ENCODE measurements at regions of chr10 and their contacts with region 1.

Region 1: GRCh38 chr10:75099952-75100763 is 11.3 kb upstream of the SAMD8 start:
- DNase-seq: peak; percentile 78 to 85
- H3K4me3 ChIP-seq: no peak overlapping the region
- H3K27ac ChIP-seq: peak overlapping the region; percentile 66 to 87
- H3K4me1 ChIP-seq: peaks cover 0 to 8% of the 10 kb centered on the region in 2 donors
- H3K27me3 ChIP-seq: no peaks in the 10 kb centered on the region
- CTCF ChIP-seq: peak; percentile 98 to 99 (median 99)
- POLR2A ChIP-seq: peak in 1 of 2 donors; percentile 31

Region 2: GRCh38 chr10:74262856-74263255 is 837.3 kb before region 1 on chr10:
- intact Hi-C with region 1: loop called (anchors 5 kb)
- DNase-seq: no peak
- H3K4me3 ChIP-seq: no peak overlapping the region
- H3K27ac ChIP-seq: no peak overlapping the region
- H3K4me1 ChIP-seq: no peaks in the 10 kb centered on the region
- H3K27me3 ChIP-seq: no peaks in the 10 kb centered on the region
- CTCF ChIP-seq: no peak
- POLR2A ChIP-seq: no peak

Measured in uterus (tissue), 4 donors.